A549 (cell line): ENCODE measurements at regions of chr1 and their contacts with region 1.

Region 1: GRCh38 chr1:236759252-236759859 is 35.7 kb upstream of the MTR start:
- DNase-seq: peak; percentile 26 to 51
- ATAC-seq: peak in 1 of 2 experiments; percentile 73; a peak in 3 of 6 replicates
- H3K4me3 ChIP-seq: no peak overlapping the region
- H3K27ac ChIP-seq: no peak overlapping the region
- H3K4me1 ChIP-seq: no peaks in the 10 kb centered on the region
- CTCF ChIP-seq: peak; percentile 75
- EP300 ChIP-seq: no peak
- POLR2A ChIP-seq: no peak
- RAD21 ChIP-seq: peak; percentile 40 to 53; a peak in 4 of 5 replicates

Region 2: DNA sequence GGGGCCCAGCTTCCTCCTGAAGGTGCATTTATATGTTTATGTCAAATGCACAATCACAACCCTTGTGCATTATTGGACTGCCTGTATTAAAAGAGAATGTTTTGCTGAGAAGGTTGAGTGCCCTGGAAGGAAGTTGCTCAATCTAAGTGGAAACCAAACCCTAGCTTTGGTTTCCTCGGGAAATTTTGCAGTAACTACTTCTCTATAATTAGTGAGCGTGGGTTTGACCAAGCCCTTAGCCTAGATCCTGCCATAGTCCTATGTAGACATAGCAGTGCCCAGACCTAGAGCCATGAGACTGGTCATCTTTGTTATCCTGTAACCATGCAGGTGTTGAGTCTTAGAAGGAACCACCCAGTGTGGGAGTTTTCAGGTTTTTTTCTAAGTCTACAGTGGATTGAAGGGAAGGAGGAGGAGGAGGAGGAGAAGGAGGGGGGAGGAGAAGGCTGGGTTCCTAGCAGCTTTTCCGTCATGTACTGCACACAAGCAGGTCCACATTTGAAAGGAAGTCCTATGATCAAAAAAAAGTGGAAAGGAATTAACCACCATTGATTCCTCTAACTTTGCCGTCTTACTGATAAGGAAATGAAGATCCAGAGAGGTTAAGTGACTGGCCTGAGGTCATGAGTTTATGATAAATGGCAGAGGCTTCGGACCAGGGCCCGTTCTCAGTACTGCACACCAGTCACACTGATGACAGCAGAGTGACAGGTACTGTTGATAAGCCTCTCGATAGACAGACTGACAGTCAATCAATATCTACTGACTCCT is 820.5 kb before region 1 on chr1:
- CTCF ChIA-PET with region 1: no interaction called
- POLR2A ChIA-PET with region 1: no interaction called
- DNase-seq: no peak
- ATAC-seq: no peak
- H3K4me3 ChIP-seq: no peak overlapping the region
- H3K27ac ChIP-seq: no peak overlapping the region
- H3K4me1 ChIP-seq: no peaks in the 10 kb centered on the region
- CTCF ChIP-seq: no peak
- EP300 ChIP-seq: no peak
- POLR2A ChIP-seq: no peak
- RAD21 ChIP-seq: no peak

Region 3: DNA sequence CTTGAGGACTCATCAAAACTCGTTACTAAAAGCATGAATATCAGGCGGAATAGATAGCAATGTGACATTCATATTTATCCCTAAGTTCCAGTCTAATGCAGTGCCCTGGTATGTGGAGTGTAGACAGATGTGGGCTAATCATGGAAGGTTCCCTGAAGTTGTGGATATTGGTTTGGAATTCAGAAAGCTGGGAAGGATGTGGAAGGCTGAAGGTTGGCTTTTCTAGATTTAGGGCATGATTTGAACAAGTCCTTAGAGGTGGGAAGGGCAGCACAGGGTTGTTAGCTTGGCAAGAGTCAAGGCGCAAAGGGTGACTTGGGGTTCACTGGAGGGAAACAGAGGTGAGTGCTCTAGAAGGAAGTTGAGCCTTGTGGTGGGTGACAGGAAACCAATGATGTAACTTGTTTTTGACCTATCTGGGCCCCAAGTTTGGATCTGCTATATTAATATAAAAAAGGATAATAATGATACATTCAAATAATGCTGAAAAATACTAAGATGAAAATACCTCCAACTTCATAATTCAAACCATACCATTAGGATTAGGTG is 213.7 kb before region 1 on chr1:
- CTCF ChIA-PET with region 1: no interaction called
- POLR2A ChIA-PET with region 1: no interaction called
- DNase-seq: no peak
- ATAC-seq: no peak
- H3K4me3 ChIP-seq: no peak overlapping the region
- H3K27ac ChIP-seq: no peak overlapping the region
- H3K4me1 ChIP-seq: no peaks in the 10 kb centered on the region
- CTCF ChIP-seq: no peak
- EP300 ChIP-seq: no peak
- POLR2A ChIP-seq: no peak
- RAD21 ChIP-seq: no peak

Region 4: DNA sequence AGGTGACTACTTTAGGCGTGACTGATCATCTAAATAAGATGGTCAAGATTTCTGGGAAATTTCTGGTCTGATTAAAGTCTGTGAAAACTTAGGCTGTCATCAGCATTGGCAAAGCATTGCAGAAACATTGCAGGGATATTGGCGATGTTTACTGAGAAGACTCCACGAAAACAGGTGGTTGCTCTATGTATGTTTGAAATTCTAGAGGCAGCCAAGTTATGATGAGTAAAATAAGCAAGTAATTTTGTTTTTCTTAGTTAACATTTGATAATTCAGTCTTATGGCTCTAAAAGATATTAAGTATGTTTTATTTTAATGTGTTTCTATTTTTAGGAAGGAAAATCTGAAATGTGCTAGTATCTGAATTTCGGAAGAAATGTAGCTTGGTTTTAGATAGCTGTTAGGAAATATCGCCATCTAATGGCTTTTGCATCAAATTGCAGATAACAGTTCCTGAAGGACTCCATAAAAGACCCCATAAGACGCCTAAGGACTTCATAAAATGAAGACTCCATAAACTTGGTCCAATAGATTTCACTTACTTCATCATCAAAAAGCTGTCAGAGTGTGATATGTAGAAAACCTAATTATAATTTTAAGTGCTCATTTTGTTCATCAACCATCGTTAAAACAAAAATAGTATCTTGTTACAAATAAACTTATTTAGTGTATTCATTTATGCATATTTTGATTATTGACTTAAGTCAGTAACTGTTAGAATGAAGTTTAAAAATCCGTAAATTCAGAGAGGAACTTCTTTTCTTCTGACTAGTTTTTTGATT is 627.2 kb after region 1 on chr1:
- CTCF ChIA-PET with region 1: interaction called, 11 read pairs
- POLR2A ChIA-PET with region 1: no interaction called
- DNase-seq: peak; percentile 15 to 26
- ATAC-seq: peak in 1 of 2 experiments; percentile 62; a peak in 3 of 6 replicates
- H3K4me3 ChIP-seq: no peak overlapping the region
- H3K27ac ChIP-seq: no peak overlapping the region
- H3K4me1 ChIP-seq: no peaks in the 10 kb centered on the region
- CTCF ChIP-seq: peak; percentile 80
- EP300 ChIP-seq: no peak
- POLR2A ChIP-seq: no peak
- RAD21 ChIP-seq: peak; percentile 72 to 74